ENCODE measurements at regions of chr4 and their contacts with region 1.

Region 1: GRCh38 chr4:1249148-1249730 is 309 bp upstream of the CTBP1 start:
- DNase-seq: peak; percentile 56
- ATAC-seq: peak; percentile 47
- H3K4me3 ChIP-seq: peak overlapping the region; percentile 68 to 78 (median 76)
- H3K27ac ChIP-seq: peak overlapping the region; percentile 84
- H3K4me1 ChIP-seq: peaks cover 64% of the 10 kb centered on the region
- H3K27me3 ChIP-seq: no peaks in the 10 kb centered on the region
- CTCF ChIP-seq: peak; percentile 9; the same call in 1 of the 2 replicates
- EP300 ChIP-seq: no peak
- POLR2A ChIP-seq: peak in 1 of 2 experiments; percentile 54; a peak in 2 of 4 replicates
- RAD21 ChIP-seq: peak; percentile 46; the same call in 1 of the 2 replicates

Region 2: DNA sequence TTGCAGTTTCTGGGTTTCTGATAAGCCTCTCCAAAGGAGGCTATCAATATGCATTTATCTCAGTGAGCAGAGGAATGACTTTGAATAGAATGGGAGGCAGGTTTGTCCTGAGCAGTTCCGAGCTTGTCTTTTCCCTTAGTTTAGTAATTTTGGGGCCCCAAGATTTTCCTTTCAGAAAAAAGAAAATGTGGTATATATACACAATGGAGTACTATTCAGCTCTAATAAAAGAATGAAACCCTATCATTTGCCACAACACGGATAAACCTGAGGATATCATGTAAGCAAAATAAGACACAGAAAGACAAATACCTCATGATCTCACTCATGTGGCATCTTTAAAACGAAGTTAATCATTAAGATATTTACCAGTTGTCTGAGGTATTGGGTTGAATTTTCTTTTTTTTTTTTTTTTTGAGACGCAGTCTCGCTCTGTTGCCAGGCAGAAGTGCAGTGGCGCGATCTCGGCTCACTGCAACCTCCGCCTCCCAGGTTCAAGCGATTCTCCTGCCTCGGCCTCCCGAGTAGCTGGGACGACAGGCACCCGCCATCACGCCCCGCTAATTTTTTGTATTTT is 750.8 kb before region 1 on chr4:
- CTCF ChIA-PET with region 1: no interaction called
- POLR2A ChIA-PET with region 1: no interaction called
- in situ Hi-C with region 1: no loop called
- intact Hi-C with region 1: no loop called
- DNase-seq: peak; percentile 8
- ATAC-seq: peak; percentile 41
- H3K4me3 ChIP-seq: peak overlapping the region; percentile 88 to 99 (median 94)
- H3K27ac ChIP-seq: peak overlapping the region; percentile 68
- H3K4me1 ChIP-seq: peaks cover 37% of the 10 kb centered on the region
- H3K27me3 ChIP-seq: no peaks in the 10 kb centered on the region; a peak in 1 of 5 replicates
- CTCF ChIP-seq: no peak
- EP300 ChIP-seq: no peak
- POLR2A ChIP-seq: no peak
- RAD21 ChIP-seq: no peak

Region 3: DNA sequence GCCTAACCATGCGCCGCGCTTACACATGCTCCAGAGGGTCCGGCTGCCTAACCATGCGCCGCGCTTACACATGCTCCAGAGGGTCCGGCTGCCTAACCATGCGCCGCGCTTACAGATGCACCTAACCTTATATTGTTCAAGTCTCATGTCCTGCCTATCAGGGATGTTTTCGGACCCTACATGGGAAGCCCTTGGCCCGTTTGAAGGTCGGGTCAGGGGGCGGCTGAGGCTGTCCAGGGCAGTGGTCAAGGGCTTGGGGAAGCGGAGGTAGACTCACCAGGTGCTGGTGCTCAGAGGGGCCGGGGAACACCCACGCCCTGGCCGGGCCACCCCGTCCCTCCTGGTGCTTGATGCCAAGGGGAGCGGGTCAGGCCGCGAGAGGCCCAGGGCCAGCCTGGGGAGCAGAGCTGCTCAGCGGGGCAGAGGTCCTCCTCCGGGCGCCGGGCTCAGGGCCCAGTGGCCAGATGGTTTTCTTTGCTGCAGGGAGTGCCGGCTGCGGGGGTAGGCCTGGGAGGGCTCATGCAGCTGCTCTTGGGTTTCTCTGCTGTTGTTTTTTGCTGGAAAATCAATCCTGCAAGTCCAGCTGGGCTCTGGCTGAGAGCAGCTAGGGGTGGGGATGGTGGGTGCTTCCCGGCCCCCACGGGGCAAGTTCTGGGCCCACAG is 41.5 kb before region 1 on chr4:
- CTCF ChIA-PET with region 1: no interaction called
- POLR2A ChIA-PET with region 1: interaction called, 14 read pairs
- in situ Hi-C with region 1: no loop called
- intact Hi-C with region 1: no loop called
- DNase-seq: no peak
- ATAC-seq: peak; percentile 10
- H3K4me3 ChIP-seq: no peak overlapping the region
- H3K27ac ChIP-seq: no peak overlapping the region
- H3K4me1 ChIP-seq: peaks cover 45% of the 10 kb centered on the region
- H3K27me3 ChIP-seq: no peaks in the 10 kb centered on the region
- CTCF ChIP-seq: no peak
- EP300 ChIP-seq: no peak
- POLR2A ChIP-seq: no peak
- RAD21 ChIP-seq: no peak

Region 4: DNA sequence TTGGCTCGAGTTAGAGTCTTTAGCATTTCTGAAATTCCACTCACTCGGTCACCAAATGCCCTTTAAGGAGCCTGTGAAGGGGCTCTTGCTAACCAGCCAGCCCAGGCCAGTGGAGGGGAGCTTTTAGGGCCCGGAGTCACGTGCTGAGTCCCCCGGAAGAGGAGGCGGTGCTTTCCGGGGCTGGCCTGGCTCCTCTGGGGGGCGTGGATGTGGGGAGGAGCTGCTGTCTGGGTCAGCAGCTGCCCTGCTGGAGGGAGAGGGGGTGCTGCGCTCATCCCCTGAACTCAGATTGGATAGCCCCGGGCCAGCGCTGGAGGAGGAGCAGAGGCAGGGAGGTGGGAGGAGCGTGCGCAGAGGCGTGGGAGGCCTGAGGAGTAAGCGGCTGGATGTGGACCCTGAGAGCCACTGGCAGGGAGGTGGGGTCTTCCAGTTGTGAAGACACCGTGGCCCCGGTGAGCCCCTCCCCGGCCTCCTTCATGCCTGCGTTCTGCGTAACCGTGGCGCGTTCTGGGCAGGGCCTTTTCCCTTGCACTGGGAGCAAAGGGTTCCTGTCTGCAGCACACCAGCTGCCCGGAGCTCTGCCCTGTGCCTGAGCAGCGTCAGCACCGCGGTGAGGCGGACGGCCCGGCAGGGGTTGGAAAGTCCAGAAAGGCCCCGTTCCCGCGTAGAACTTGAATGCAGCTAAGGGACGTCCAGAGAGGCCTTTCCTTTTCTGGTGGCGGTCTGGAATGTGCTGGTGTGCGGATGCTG is 60.2 kb after region 1 on chr4:
- CTCF ChIA-PET with region 1: no interaction called
- POLR2A ChIA-PET with region 1: interaction called, 15 read pairs
- in situ Hi-C with region 1: no loop called
- intact Hi-C with region 1: no loop called
- DNase-seq: peak; percentile 91
- ATAC-seq: peak; percentile 95
- H3K4me3 ChIP-seq: peak overlapping the region; percentile 57 to 78 (median 73); a peak in 5 of 6 replicates
- H3K27ac ChIP-seq: peak overlapping the region; percentile 75
- H3K4me1 ChIP-seq: peaks cover 72% of the 10 kb centered on the region
- H3K27me3 ChIP-seq: no peaks in the 10 kb centered on the region
- CTCF ChIP-seq: no peak
- EP300 ChIP-seq: no peak
- POLR2A ChIP-seq: peak in 1 of 2 experiments; percentile 33; a peak in 1 of 4 replicates
- RAD21 ChIP-seq: peak; percentile 36; the same call in 1 of the 2 replicates

Region 5: DNA sequence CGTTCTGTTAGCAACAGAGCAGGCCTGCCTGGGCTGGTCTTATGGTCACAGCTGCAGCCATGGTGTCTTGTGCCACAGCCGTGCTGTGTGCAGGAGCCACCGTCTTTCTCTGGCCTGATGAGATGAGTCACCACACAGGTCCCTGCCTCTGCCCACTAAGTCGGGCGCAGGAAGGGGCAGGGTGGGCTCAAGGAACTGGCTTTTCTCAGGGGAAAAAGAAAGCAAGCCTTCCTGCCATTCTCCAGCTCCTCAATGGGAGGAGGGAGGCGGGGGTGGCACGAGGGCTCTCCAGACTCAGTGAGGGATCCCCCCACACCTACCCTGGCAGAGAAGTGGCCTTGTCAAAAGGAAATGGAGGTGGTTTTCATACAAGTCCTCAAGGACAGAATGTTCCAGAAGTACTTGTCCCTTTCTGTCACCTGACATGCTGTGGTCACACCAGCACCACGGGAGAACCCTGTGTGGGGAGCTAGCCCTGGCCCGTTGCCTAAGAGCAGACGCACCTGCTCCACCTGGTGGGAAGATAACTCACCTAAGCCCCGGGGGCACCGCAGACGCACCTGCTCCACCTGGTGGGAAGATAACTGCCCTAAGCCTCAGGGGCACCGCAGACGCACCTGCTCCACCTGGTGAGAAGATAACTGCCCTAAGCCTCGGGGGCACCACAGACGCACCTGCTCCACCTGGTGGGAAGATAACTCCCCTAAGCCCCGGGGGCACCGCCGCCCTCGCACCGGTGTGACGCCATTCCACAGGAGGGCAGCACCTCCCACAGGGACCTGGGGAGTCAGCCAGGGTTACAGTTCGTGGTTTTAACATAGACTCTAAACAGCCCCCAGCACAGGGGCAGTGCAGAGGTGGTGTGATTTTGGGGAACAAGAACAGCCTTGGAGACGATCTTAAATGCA is 116.3 kb after region 1 on chr4:
- CTCF ChIA-PET with region 1: no interaction called
- POLR2A ChIA-PET with region 1: no interaction called
- in situ Hi-C with region 1: no loop called
- intact Hi-C with region 1: no loop called
- DNase-seq: no peak
- ATAC-seq: no peak
- H3K4me3 ChIP-seq: no peak overlapping the region
- H3K27ac ChIP-seq: no peak overlapping the region
- H3K4me1 ChIP-seq: peaks cover 7% of the 10 kb centered on the region
- H3K27me3 ChIP-seq: no peaks in the 10 kb centered on the region
- CTCF ChIP-seq: 0 out of 2 replicates have a peak, but pooled peaks have one; percentile 15
- EP300 ChIP-seq: no peak
- POLR2A ChIP-seq: no peak
- RAD21 ChIP-seq: no peak

Measured in HepG2 (cell line).